PC-9 (cell line): ENCODE measurements at regions of chr1 and their contacts with region 1.

Region 1: DNA sequence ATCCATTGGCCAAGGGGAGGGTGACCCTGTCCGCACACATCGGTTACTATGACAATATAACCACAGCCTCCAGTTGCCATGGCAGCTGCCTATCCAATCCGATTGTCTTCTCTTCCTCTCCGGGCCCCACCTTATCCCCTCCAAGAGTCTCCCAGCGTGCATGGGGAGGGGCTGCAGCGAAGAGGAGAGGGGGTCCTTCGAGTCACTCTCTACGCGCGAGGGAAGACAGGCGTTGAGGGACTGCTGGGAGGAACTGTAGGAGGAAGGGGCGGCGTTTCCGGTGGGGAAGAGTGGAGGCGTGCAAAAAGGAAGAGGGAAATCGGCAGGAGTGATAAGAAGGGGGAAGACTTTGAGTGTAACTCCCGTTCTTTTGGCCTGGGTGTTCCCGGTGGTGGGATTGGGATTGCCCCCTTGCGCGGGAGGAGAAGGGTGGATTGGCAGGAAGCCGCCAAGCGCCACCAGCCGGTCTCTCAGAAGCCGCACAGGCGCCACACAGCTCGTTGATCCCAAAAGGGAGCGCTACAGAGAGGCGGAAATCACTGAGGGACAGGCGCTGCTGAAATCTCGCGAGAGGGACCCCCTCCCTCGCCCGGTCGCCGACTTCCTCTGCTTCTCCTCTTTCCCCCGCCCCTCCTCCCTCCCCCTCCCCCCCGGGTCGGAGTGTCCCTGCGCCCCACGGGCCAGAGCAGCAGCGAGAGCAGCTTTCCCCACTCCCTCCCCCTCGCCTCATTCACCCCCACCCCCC is 384 bp upstream of the SMG7 start:
- DNase-seq: peak; percentile 84 to 92
- H3K4me3 ChIP-seq: peak overlapping the region; percentile 82
- H3K27ac ChIP-seq: peak overlapping the region; percentile 94
- H3K4me1 ChIP-seq: peaks cover 59% of the 10 kb centered on the region
- H3K27me3 ChIP-seq: no peaks in the 10 kb centered on the region
- CTCF ChIP-seq: no peak; the same call in 1 of the 2 replicates

Region 2: DNA sequence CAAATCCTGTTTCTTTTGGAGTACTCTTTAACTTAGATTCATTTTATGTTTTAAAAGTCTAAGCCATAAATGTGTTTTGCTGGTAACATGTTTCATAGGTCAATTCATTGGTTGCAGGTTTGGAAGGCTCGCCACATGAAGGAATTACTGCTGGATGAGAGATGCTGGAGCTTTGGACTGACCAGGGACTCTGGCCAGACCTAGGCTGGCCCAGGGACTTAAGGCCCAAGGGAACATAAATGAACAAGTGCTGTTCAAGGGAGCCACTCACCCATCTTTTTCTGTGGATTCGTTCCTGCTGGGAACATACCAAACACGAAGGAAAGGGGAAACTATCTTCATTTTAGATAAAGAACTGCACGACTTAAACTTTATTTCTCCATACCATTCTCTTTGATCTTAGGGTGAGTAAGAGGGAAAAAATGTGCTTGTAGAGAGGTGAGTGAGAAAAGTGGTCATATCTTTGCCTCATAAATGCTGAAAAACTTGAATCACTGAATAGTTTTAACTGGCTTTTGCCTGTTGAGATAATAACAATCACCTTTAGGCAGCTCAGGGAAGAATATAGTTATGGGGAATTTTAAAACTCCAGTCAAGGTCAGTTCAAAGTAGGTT is 503.7 kb before region 1 on chr1:
- CTCF ChIA-PET with region 1: no interaction called
- POLR2A ChIA-PET with region 1: no interaction called
- intact Hi-C with region 1: loop called (anchors 5 kb)
- DNase-seq: peak; percentile 37 to 88
- H3K4me3 ChIP-seq: peak overlapping the region; percentile 13; the same call in 1 of the 2 replicates
- H3K27ac ChIP-seq: peak overlapping the region; percentile 76
- H3K4me1 ChIP-seq: peaks cover 36% of the 10 kb centered on the region
- H3K27me3 ChIP-seq: no peaks in the 10 kb centered on the region
- CTCF ChIP-seq: no peak

Region 3: DNA sequence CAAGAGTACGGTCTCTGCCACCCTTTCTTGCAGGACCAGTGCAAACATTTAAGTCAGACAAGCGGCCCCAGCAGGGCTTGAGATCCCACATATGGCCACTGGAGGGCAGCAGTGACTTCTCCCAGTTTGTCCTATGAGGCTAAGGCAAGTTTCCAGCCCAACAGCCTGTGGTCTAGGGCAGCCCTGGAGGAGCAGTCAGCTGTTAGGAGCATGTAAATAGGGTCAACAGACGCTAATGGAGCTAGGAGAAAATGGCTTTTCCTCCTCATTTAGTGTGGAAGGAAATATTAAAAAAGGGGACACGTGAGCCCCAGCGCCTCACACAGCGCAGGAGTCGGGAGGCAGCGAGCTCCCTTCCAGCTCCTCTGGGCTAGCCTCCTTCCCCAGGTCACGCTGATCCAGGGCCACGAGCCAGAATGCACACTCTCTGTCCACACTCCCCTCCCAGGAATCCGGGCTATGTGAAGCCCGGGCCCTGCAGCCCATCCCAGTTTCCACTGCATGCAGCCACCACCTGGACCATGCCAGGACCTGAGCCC is 190.3 kb before region 1 on chr1:
- CTCF ChIA-PET with region 1: no interaction called
- POLR2A ChIA-PET with region 1: no interaction called
- intact Hi-C with region 1: loop called (anchors 1 kb)
- DNase-seq: peak; percentile 77 to 91
- H3K4me3 ChIP-seq: no peak overlapping the region
- H3K27ac ChIP-seq: peak overlapping the region; percentile 45; the same call in 1 of the 2 replicates
- H3K4me1 ChIP-seq: peaks cover 54% of the 10 kb centered on the region
- H3K27me3 ChIP-seq: no peaks in the 10 kb centered on the region
- CTCF ChIP-seq: peak; percentile 96

Region 4: GRCh38 chr1:183411091-183411490 is 60.8 kb before region 1 on chr1:
- CTCF ChIA-PET with region 1: no interaction called
- POLR2A ChIA-PET with region 1: no interaction called
- intact Hi-C with region 1: loop called (anchors 2 kb)
- DNase-seq: peak; percentile 43 to 95
- H3K4me3 ChIP-seq: no peak overlapping the region
- H3K27ac ChIP-seq: peak overlapping the region; percentile 77
- H3K4me1 ChIP-seq: peaks cover 30% of the 10 kb centered on the region
- H3K27me3 ChIP-seq: no peaks in the 10 kb centered on the region
- CTCF ChIP-seq: no peak

Region 5: DNA sequence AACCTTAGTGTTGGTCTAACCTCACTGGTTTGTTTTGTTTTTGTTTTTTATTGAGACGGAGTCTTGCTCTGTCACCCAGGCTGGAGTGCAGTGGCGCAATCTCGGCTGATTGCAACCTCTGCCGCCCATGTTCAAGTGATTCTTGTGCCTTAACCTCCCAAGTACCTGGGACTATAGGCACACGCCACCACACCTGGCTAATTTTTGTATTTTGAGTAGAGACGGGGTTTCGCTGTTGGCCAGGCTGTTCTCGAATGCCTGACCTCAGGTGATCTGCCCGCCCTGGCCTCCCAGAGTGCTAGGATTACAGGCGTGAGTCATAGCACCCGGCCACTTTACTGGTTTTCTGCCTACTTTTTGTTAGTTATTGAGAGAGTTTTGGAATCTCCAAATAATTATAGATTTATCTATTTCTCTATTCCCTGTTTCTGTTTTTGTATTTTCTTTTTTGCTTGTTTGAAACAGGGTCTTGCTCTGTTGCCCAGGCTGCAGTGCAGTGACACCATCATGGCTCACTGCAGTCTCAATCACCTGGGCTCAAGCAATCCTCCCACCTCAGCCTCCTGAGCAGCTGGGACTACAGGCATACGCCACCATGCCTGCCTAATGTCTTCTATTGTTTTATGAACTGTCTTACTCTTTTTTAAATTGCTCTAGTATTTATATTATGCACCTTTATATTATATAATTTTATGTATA is 21.8 kb after region 1 on chr1:
- CTCF ChIA-PET with region 1: no interaction called
- POLR2A ChIA-PET with region 1: interaction called, 3 read pairs
- intact Hi-C with region 1: loop called (anchors 2 kb)
- DNase-seq: peak; percentile 67 to 78
- H3K4me3 ChIP-seq: peak overlapping the region; percentile 47; the same call in 1 of the 2 replicates
- H3K27ac ChIP-seq: peak overlapping the region; percentile 84
- H3K4me1 ChIP-seq: peaks cover 31% of the 10 kb centered on the region
- H3K27me3 ChIP-seq: no peaks in the 10 kb centered on the region
- CTCF ChIP-seq: no peak

Region 6: DNA sequence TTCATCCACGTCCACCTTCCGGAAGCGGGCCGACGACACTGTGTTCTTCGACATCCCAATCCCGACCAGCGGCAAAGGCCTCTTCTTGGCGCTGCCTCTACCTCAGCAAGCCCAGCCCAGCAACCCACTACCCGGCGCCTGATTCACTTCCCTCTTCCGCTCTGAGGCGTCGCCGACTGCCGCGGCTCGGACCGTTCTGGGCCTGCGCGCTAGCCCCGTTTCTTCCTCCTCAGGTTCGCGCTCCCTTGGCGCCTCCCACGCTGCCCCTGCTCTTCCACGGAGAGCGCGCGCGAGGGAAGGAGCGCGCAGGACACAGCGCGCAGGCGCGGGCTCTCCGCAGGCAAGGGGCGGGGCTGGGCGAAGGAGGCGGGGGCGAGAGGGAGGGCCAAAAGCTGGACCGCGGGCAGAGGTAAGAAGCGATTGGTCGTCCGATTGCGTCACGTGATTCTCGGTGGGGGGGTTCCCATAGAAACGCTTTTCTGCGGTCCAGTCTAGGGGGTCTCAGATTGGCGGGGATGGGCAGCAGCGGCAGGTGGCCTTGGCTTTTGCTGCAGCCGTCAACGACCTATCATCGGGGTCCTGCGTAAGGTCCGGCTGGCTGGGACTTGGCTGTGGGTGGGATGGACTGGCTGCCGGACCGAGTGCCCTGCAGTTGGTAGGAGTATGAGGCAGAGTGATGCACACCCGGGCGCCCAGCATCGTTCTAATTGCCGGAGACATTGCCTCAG is 163.9 kb after region 1 on chr1 and contains the start of gene ARPC5:
- CTCF ChIA-PET with region 1: no interaction called
- POLR2A ChIA-PET with region 1: no interaction called
- intact Hi-C with region 1: loop called (anchors 5 kb)
- DNase-seq: peak; percentile 89 to 96
- H3K4me3 ChIP-seq: peak within 1 kb of the TSS; percentile 98
- H3K27ac ChIP-seq: peak within 1 kb of the TSS; percentile 69
- H3K4me1 ChIP-seq: peaks cover 36% of the 10 kb centered on the region
- H3K27me3 ChIP-seq: no peaks in the 10 kb centered on the region
- CTCF ChIP-seq: no peak
- total RNA-seq, gene ARPC5: 143 and 150 TPM in 2 replicates